ENCODE measurements at regions of chr18 and their contacts with region 1.

Region 1: DNA sequence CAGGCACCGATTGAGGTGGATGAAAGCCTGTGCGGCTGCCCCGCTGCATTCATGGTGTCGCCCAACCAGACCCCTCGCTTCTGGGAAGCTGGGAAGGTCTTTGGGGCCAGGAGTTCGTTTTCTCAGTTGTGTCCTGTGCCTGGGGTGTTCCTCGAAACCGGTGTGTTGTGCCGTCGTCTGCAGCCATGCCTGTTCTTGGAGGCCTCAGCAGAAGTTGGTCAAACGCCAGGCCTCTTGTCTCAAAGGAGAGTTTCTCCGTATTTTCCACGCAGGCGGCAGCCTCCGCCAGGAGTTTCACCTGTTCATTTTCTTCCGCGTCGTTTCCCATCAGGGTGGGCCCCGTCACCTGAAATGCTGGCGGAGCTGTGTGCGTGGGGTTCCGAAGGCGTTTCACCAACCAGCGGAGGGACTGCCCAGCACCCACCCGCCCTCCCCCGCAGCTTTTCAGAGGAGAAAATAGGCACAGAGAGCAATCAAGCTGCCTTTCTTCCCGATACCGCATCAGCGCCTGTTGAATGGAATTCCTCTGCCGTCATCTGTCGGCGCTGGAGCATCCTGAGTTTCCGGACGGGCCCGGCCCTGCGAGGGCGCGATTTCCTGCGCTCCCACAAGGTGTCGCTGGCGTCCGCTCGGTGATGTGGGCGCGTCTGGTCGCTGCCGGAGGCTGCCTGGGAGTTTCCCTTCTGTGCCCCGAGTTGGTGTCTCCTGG is 17.0 kb upstream of the NFATC1 start:
- DNase-seq: no peak
- H3K4me3 ChIP-seq: no peak overlapping the region
- H3K27ac ChIP-seq: no peak overlapping the region
- H3K27me3 ChIP-seq: no peaks in the 10 kb centered on the region
- CTCF ChIP-seq: peak; percentile 95

Region 2: GRCh38 chr18:79217979-79218604 is 160.6 kb before region 1 on chr18:
- CTCF ChIA-PET with region 1: no interaction called
- POLR2A ChIA-PET with region 1: no interaction called
- DNase-seq: no peak
- H3K4me3 ChIP-seq: no peak overlapping the region
- H3K27ac ChIP-seq: no peak overlapping the region
- H3K27me3 ChIP-seq: no peaks in the 10 kb centered on the region
- CTCF ChIP-seq: no peak

Region 3: GRCh38 chr18:79275992-79276391 is 102.7 kb before region 1 on chr18:
- CTCF ChIA-PET with region 1: no interaction called
- POLR2A ChIA-PET with region 1: no interaction called
- DNase-seq: no peak
- H3K4me3 ChIP-seq: no peak overlapping the region
- H3K27ac ChIP-seq: no peak overlapping the region
- H3K27me3 ChIP-seq: no peaks in the 10 kb centered on the region
- CTCF ChIP-seq: no peak

Region 4: DNA sequence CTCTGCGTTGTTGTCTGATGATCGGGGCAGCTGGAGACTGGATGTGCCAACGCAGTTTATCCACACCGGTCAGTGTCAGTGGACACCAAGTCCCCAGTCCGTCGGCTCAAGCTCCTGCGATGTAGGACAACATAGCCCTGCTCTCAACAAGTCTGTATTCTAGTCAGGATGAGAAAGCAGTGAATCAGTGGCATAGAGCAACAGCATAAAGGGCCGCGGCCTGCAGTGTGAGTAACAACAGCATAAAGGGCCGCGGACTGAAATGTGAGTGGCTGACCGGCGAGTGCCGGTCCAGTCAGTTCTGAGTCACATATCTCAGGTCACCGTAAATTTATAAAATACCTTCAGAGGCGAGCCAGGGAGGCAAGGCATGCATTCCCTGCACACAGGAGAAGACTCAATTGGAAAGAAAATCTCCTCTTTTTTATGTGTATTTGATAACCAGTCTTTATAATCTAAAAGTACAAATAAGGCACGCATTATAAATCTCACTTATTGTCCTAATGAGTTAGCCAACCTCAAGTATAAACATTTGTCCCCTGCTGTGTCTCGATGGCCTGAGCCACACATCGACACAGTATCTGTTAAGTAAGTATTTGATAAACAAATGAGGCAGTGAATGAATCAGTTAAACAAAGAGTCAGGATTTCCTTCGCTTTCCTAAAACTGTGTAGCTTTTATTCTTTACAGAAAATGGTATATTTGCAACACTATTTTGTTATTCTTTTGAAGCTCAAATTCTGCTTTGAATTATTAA is 16.8 kb before region 1 on chr18:
- CTCF ChIA-PET with region 1: interaction called, 28 read pairs
- POLR2A ChIA-PET with region 1: no interaction called
- DNase-seq: peak; percentile 71
- H3K4me3 ChIP-seq: 0 out of 2 replicates have a peak overlapping the region, but pooled peaks have one; percentile 7
- H3K27ac ChIP-seq: peak overlapping the region; percentile 83
- H3K27me3 ChIP-seq: no peaks in the 10 kb centered on the region
- CTCF ChIP-seq: no peak

Region 5: GRCh38 chr18:79393635-79394533 is 15.2 kb after region 1 on chr18:
- CTCF ChIA-PET with region 1: interaction called, 19 read pairs
- POLR2A ChIA-PET with region 1: no interaction called
- DNase-seq: peak; percentile 20
- H3K4me3 ChIP-seq: peak overlapping the region; percentile 52
- H3K27ac ChIP-seq: peak overlapping the region; percentile 11
- H3K27me3 ChIP-seq: peaks cover 44% of the 10 kb centered on the region
- CTCF ChIP-seq: no peak

Region 6: GRCh38 chr18:79528846-79529245 is 150.2 kb after region 1 on chr18:
- CTCF ChIA-PET with region 1: interaction called, 68 read pairs
- POLR2A ChIA-PET with region 1: no interaction called
- DNase-seq: peak; percentile 15
- H3K4me3 ChIP-seq: no peak overlapping the region
- H3K27ac ChIP-seq: no peak overlapping the region
- H3K27me3 ChIP-seq: peaks cover 32% of the 10 kb centered on the region
- CTCF ChIP-seq: peak; percentile 89

Region 7: DNA sequence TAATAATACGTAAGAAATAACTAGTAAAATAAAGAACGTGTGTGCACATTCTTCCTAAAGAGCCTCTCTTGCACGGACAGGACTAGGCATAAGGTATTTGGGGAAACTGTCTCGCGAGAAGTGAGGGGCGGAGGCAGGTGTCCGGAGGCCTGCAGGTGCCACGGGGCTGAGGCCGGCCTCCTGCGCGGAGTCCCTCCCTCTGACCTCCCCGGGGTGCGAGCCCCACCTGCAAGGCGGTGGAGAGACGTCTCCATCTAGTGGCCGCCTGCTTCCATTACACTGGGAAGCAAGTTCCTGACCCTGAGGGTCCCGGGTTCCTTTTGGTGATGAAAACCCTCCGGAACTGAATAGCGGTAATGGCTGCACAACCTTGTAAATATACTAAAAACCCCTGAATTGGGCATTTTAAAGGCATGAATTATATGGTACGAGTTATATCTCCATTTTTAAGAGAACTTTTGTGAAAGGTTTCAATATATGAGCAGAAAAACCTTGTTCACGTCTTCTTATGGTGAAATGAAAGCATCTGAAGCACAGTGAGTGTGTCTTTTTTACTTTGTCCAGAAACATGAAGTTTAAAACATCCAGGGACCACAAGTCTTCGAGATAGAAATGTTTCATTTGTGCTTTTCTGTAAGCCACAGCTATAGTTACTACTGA is 265.4 kb after region 1 on chr18:
- CTCF ChIA-PET with region 1: interaction called, 107 read pairs
- POLR2A ChIA-PET with region 1: no interaction called
- DNase-seq: no peak
- H3K4me3 ChIP-seq: no peak overlapping the region
- H3K27ac ChIP-seq: no peak overlapping the region
- H3K27me3 ChIP-seq: peaks cover 23% of the 10 kb centered on the region
- CTCF ChIP-seq: peak; percentile 97

Region 8: GRCh38 chr18:79657342-79657985 is 278.8 kb after region 1 on chr18:
- CTCF ChIA-PET with region 1: interaction called, 14 read pairs
- POLR2A ChIA-PET with region 1: no interaction called
- DNase-seq: no peak
- H3K4me3 ChIP-seq: no peak overlapping the region
- H3K27ac ChIP-seq: no peak overlapping the region
- H3K27me3 ChIP-seq: peaks cover 65% of the 10 kb centered on the region
- CTCF ChIP-seq: no peak

Region 9: GRCh38 chr18:79958981-79959380 is 580.3 kb after region 1 on chr18:
- CTCF ChIA-PET with region 1: interaction called, 10 read pairs
- POLR2A ChIA-PET with region 1: no interaction called
- DNase-seq: no peak
- H3K4me3 ChIP-seq: no peak overlapping the region
- H3K27ac ChIP-seq: no peak overlapping the region
- H3K27me3 ChIP-seq: no peaks in the 10 kb centered on the region
- CTCF ChIP-seq: no peak

Measured in AG04450 (cell line).